AG04450 (cell line): ENCODE measurements at regions of chr2 and their contacts with region 1.

Region 1: DNA sequence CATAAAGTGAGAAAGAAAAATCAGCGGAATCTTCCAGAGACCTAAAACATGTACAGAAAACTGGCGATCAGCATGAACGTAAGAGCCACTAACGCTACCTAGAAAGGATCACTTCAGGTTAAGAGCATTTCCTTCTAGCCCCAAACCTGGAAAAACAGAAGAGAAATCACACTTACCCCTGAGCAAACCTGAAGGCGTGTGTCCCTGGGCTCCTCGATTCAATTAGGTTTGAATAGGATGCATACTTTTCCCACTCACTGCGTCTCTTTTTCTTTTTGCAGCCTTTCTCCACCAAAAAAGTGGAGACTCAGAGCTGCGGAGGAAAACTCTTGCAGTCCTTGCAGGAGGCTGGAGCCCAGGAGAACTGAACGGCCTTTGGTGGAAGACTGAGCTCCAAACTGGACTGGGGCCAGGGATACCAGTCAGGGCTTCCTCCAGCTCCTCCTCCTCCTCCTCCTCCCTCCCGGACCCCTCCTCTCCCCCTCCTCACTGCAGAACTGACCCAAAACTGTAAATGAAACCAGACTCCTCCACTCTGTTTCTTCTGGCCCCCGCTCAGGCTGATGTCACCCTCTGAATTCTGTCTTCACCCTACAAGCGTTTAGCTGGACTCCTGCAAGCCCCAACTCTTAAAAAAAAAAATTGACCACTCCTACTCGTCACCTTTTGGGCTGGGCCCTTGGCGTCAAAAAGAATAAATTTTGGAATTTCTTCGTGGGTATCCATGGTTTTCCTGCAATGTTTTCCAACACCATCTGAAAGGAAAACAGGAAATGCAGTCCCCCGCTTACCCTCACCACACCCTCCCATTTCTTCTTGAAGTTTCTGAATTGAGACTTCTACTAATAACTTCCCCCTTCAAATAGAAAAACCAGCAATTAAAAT is at the start of gene COL6A3:
- DNase-seq: peak; percentile 96
- H3K4me3 ChIP-seq: peak within 1 kb of the TSS; percentile 100
- H3K27ac ChIP-seq: peak within 1 kb of the TSS; percentile 94
- H3K27me3 ChIP-seq: no peaks in the 10 kb centered on the region
- CTCF ChIP-seq: no peak
- polyA plus RNA-seq, gene COL6A3: 1,384 and 2,107 TPM in 2 replicates

Region 2: DNA sequence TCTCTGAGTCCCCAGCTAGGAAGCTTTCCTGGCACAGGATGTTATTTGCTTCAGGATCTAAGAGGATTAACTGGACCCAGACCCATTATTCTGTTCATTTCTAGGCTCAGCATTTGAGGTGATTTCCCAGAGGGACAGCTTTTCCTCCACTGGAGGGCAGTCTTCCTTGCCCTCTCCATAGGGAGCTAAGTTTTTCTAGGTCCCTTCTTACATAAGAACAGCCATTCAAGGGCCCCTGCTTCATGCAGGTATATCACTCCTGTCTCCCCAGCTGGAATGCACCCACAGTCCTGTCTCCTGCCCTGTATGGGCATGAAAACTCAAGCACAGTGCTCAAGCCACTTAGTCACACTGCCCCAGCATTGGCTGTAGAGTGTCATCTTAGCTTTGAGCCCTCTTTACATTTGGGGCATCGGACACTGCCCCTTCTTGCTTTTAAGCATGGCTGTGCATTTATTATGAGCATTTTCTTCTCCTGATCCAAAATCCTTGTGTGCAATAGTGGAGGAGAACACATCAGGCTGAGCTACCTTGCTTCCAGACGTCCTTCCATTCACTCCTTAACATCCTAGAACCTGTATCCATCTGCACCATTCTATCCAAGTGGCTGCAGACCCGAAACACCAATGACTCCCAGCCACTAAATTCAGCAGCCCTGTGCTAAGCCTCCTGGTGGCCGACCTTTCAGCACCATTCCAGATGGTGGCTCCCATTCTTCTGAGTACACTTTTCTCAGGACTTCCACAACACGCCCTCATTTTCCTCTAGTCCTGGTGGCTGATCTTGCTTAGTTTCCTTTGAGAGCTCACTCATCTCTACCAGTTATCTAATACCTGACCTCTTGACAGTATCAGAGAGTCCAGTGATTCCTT is 248.4 kb before region 1 on chr2:
- CTCF ChIA-PET with region 1: interaction called, 12 read pairs
- POLR2A ChIA-PET with region 1: no interaction called
- DNase-seq: no peak
- H3K4me3 ChIP-seq: no peak overlapping the region
- H3K27ac ChIP-seq: no peak overlapping the region
- H3K27me3 ChIP-seq: no peaks in the 10 kb centered on the region
- CTCF ChIP-seq: peak; percentile 72

Region 3: DNA sequence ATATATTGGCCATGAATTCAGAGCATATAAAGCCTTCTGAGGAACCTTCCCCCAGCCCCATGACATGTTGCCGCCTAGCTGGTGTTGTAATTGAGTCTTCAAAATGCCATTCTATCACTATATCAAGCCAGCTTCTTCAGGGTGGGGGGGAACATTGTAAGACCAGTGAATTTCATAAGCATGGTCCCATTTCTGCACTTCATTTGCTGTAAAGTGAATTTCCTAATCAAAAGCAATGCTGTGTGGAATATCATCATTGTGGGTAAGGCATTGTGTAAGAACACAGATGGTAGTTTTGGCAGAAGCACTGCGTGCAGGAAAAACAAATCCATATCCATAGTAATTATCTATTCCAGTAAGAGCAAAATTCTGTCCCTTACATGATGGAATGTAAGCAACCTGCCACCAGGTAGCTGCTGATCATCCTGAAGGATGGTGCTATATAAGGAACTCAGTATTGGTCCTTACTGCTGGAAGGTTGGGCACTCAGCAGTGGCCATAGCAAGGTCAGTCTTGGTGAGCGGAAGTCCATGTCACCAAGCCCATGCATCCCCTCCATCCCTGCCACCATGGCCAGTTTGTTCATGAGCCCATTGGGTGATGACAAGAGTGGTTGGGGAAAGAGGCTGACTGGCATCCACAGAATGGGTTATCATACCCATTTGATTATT is 168.9 kb before region 1 on chr2:
- CTCF ChIA-PET with region 1: no interaction called
- POLR2A ChIA-PET with region 1: no interaction called
- DNase-seq: no peak
- H3K4me3 ChIP-seq: no peak overlapping the region
- H3K27ac ChIP-seq: peak overlapping the region; percentile 58
- H3K27me3 ChIP-seq: no peaks in the 10 kb centered on the region
- CTCF ChIP-seq: no peak

Region 4: GRCh38 chr2:237403024-237403882 is 10.8 kb before region 1 on chr2:
- CTCF ChIA-PET with region 1: interaction called, 6 read pairs
- POLR2A ChIA-PET with region 1: interaction called, 10 read pairs
- DNase-seq: no peak
- H3K4me3 ChIP-seq: peak overlapping the region; percentile 20
- H3K27ac ChIP-seq: peak overlapping the region; percentile 83
- H3K27me3 ChIP-seq: no peaks in the 10 kb centered on the region
- CTCF ChIP-seq: no peak

Region 5: DNA sequence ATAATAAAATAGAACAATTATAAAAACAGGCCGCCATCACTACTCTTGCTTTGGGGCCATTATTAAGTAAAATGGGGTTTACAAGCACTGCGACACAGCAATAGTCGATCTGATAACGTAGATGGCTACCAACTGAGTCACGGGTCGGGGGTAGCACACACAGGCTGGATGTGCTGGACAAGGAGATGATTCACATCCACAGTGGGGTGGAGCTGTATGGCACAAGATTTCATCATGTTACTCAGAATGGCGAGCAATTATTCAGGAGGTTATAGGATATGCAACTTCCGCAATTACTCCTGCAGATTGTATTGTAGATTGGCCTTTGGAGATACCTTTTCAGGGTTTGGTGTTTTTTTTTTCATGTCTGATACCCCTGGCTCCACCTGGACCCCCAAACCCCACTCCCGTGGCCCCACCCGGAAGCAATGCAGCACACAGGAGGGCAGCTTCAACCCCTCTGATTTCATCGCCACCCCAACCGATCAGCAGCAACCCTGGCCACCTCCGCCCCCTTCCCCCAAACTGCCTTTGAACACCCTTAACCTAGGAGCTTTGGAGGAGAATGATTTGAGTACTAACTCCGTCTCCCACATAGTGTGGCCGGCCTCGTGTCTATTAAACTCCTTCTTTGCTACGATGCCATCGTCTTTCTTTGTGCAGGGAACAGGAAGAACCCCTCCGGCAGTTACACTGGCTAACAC is 51.6 kb after region 1 on chr2:
- CTCF ChIA-PET with region 1: interaction called, 12 read pairs
- POLR2A ChIA-PET with region 1: interaction called, 18 read pairs
- DNase-seq: peak; percentile 93
- H3K4me3 ChIP-seq: no peak overlapping the region
- H3K27ac ChIP-seq: peak overlapping the region; percentile 98
- H3K27me3 ChIP-seq: no peaks in the 10 kb centered on the region
- CTCF ChIP-seq: no peak

Region 6: DNA sequence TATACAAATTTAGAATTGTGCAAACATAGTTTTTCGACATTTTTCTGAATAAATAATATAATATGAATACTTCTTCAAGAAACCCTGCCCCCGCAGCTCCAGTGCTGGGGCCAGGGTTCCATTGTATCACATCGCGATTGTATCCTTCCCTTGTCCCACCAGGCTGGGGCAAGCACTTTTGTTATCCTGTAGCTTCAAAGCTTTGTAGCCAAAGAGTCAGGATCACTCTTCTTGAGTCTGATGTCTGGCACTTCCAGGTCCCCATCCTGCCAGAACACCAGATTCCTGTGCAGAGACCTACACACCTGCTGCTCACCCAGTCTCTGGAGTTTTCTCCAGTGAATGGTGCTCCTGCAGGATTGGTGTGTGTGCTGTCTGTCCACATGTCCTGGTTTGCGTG is 1199.6 kb after region 1 on chr2:
- CTCF ChIA-PET with region 1: no interaction called
- POLR2A ChIA-PET with region 1: no interaction called
- DNase-seq: no peak
- H3K4me3 ChIP-seq: no peak overlapping the region
- H3K27ac ChIP-seq: no peak overlapping the region
- H3K27me3 ChIP-seq: peaks cover 2% of the 10 kb centered on the region
- CTCF ChIP-seq: no peak